ENCODE measurements at regions of chr1 and their contacts with region 1.

Region 1: GRCh38 chr1:46340404-46341221 is at the start of gene NSUN4:
- H3K4me3 Mint-ChIP-seq: peak within 1 kb of the TSS; percentile 99
- H3K27ac Mint-ChIP-seq: peak within 1 kb of the TSS; percentile 100
- H3K4me1 Mint-ChIP-seq: peaks cover 58% of the 10 kb centered on the region
- H3K27me3 Mint-ChIP-seq: no peaks in the 10 kb centered on the region

Region 2: GRCh38 chr1:46303038-46303871 is 37.4 kb before region 1 on chr1 and contains the starts of genes LRRC41 and UQCRH:
- intact Hi-C with region 1: loop called (anchors 5 kb)
- H3K4me3 Mint-ChIP-seq: peak within 1 kb of the TSS; percentile 99
- H3K27ac Mint-ChIP-seq: peak within 1 kb of the TSS; percentile 99
- H3K4me1 Mint-ChIP-seq: peaks cover 53% of the 10 kb centered on the region
- H3K27me3 Mint-ChIP-seq: no peaks in the 10 kb centered on the region

Region 3: GRCh38 chr1:46489638-46490405 is 149.2 kb after region 1 on chr1 and contains the start of gene DMBX1:
- intact Hi-C with region 1: no loop called
- H3K4me3 Mint-ChIP-seq: peak within 1 kb of the TSS; percentile 62
- H3K27ac Mint-ChIP-seq: peak within 1 kb of the TSS; percentile 48
- H3K4me1 Mint-ChIP-seq: peaks cover 44% of the 10 kb centered on the region
- H3K27me3 Mint-ChIP-seq: peaks cover 98% of the 10 kb centered on the region

Measured in dendritic cell treated with granulocyte-macrophage colony-stimulating factor and Interleukin-4, amounts not matched to agents 40 ng/mL and 50 ng/mL, for 4 days (primary cell).